GM12878 (cell line): ENCODE measurements at regions of chr13 and their contacts with region 1.

Region 1: GRCh38 chr13:103168901-103169508 is 102.8 kb upstream of the SLC10A2 start:
- DNase-seq: no peak
- ATAC-seq: peak; percentile 62
- H3K4me3 ChIP-seq: no peak overlapping the region
- H3K27ac ChIP-seq: no peak overlapping the region
- H3K4me1 ChIP-seq: no peaks in the 10 kb centered on the region
- H3K27me3 ChIP-seq: no peaks in the 10 kb centered on the region
- CTCF ChIP-seq: no peak
- EP300 ChIP-seq: no peak
- POLR2A ChIP-seq: no peak
- RAD21 ChIP-seq: no peak

Region 2: GRCh38 chr13:103145442-103145841 is 23.6 kb before region 1 on chr13:
- CTCF ChIA-PET with region 1: interaction called, 4 read pairs
- POLR2A ChIA-PET with region 1: interaction called, 3 read pairs
- RAD21 ChIA-PET with region 1: interaction called, 3 read pairs
- SMC1A ChIA-PET with region 1: interaction called, 21 read pairs
- in situ Hi-C with region 1: no loop called
- intact Hi-C with region 1: no loop called
- DNase-seq: no peak
- ATAC-seq: no peak
- H3K4me3 ChIP-seq: no peak overlapping the region
- H3K27ac ChIP-seq: no peak overlapping the region
- H3K4me1 ChIP-seq: no peaks in the 10 kb centered on the region
- H3K27me3 ChIP-seq: no peaks in the 10 kb centered on the region
- CTCF ChIP-seq: no peak
- EP300 ChIP-seq: no peak
- POLR2A ChIP-seq: no peak
- RAD21 ChIP-seq: no peak